Esophagus muscularis mucosa (tissue), 4 donors: ENCODE measurements at regions of chr4 and their contacts with region 1.

Region 1: GRCh38 chr4:75710246-75710645 is 14.1 kb upstream of the USO1 start:
- DNase-seq: no peak
- H3K4me3 ChIP-seq: no peak overlapping the region
- H3K27ac ChIP-seq: no peak overlapping the region
- H3K4me1 ChIP-seq: peaks cover 10 to 14% (median 12%) of the 10 kb centered on the region in 4 donors
- H3K27me3 ChIP-seq: no peaks in the 10 kb centered on the region
- CTCF ChIP-seq: no peak
- EP300 ChIP-seq: no peak
- POLR2A ChIP-seq: no peak

Region 2: DNA sequence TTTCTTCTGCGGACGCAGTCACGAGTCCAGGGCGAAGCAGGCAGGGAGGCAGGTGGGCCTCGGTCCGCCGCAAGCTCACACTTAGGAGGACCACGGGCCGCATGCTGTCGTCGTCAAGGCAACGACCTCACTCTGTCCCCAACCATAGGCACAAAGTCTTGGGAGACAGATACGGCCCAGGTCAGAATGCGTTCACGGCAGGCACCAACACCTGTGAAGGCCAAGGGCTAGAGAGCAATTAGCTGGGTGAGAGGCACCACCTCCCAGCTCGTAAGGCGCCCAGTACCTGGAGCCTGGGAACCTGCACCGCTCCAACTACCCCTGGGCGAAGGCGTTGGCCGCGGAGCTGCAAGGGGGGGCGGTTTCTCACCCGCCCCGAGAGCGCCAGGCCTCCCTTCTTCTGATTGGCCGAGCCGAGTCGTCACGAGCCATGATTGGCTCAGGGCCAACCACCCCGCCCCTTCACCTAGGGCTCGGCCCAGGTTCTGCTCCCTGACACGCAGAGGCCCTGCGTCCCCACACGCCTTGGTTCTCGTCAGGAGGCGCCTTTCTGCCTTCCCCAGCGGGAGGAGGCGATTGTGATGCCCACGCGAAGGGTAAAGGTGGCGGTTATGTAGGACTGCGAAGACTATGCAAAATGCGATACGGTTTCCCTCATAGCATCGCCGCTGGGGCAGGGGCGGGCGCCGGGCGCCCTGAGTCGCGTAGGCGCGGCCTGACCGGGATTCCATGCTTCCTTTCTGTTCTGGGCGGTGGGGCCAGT is 79.9 kb before region 1 on chr4 and contains the start of gene CDKL2:
- intact Hi-C with region 1: no loop called
- DNase-seq: peak; percentile 96
- H3K4me3 ChIP-seq: peak within 1 kb of the TSS; percentile 66 to 82 (median 68)
- H3K27ac ChIP-seq: peak within 1 kb of the TSS; percentile 59 to 78 (median 74)
- H3K4me1 ChIP-seq: peaks cover 2 to 30% (median 18%) of the 10 kb centered on the region in 4 donors
- H3K27me3 ChIP-seq: no peaks in the 10 kb centered on the region
- CTCF ChIP-seq: no peak
- EP300 ChIP-seq: no peak
- POLR2A ChIP-seq: no peak
- total RNA-seq, gene CDKL2: 2.9 to 6.2 (median 3.1) TPM

Region 3: DNA sequence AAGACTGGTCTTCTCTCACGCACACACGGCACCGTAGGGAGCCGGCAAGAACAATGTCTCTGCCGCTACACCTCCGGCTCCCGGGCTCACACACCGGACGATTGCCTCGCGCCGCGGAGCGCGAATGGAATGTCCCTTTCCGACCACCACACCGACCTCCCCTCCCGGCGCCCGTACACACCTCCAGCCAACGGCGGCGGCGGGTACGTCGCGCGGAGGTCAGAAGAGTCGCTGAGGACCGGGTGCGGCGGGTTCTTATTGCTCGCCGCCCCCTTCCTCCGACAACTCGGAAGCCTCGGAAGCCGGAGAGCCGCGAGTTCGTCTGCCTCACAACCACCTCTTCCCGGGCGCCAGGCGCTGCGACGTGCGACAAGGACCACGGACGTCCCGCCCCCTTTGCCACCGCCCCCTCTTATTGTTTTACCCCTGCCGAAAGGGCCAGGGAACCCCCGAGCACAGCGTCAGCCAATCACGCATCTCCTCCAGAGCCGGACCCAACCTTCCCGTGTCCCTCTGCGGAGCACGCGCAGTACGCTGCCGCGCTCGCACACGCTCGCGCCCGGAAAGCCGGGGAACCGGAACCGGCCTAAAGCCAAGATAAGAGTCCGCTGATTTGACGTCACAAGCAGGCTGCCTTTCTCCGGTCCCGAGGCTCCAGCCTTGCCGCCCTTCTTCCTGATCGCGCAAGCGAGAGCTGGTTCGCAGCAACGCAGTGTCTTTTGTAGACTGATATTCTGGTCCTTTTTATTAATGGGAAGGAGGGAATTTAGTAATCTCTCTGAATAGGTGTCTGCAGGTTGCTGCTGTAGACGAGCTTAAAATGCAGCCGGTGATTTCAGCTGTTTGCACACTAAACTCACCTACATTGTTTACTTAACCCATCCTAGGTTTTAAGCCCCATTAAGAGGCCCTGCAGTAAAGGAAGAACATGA is 37.0 kb before region 1 on chr4 and contains the start of gene G3BP2:
- intact Hi-C with region 1: loop called (anchors 5 kb)
- DNase-seq: peak; percentile 99
- H3K4me3 ChIP-seq: peak within 1 kb of the TSS; percentile 96 to 100 (median 98)
- H3K27ac ChIP-seq: peak within 1 kb of the TSS; percentile 97 to 99 (median 98)
- H3K4me1 ChIP-seq: peaks cover 39 to 44% (median 43%) of the 10 kb centered on the region in 4 donors
- H3K27me3 ChIP-seq: no peaks in the 10 kb centered on the region
- CTCF ChIP-seq: peak in 1 of 3 experiments; percentile 22
- EP300 ChIP-seq: no peak
- POLR2A ChIP-seq: peak; percentile 84
- total RNA-seq, gene G3BP2: 94.6 to 127 (median 109) TPM

Region 4: GRCh38 chr4:75779105-75779757 is 69.0 kb after region 1 on chr4:
- intact Hi-C with region 1: no loop called
- DNase-seq: no peak
- H3K4me3 ChIP-seq: no peak overlapping the region
- H3K27ac ChIP-seq: no peak overlapping the region
- H3K4me1 ChIP-seq: no peaks in the 10 kb centered on the region
- H3K27me3 ChIP-seq: no peaks in the 10 kb centered on the region
- CTCF ChIP-seq: no peak
- EP300 ChIP-seq: no peak
- POLR2A ChIP-seq: no peak